ENCODE measurements at regions of chr19 and their contacts with region 1.

Region 1: GRCh38 chr19:18058208-18059030 is 28.3 kb downstream of the IL12RB1 start:
- DNase-seq: no peak
- H3K4me3 ChIP-seq: peak overlapping the region; percentile 30
- CTCF ChIP-seq: peak; percentile 93

Region 2: GRCh38 chr19:17947815-17948513 is 110.5 kb before region 1 on chr19:
- CTCF ChIA-PET with region 1: interaction called, 12 read pairs
- POLR2A ChIA-PET with region 1: no interaction called
- DNase-seq: no peak
- H3K4me3 ChIP-seq: peak overlapping the region; percentile 60
- CTCF ChIP-seq: no peak

Region 3: DNA sequence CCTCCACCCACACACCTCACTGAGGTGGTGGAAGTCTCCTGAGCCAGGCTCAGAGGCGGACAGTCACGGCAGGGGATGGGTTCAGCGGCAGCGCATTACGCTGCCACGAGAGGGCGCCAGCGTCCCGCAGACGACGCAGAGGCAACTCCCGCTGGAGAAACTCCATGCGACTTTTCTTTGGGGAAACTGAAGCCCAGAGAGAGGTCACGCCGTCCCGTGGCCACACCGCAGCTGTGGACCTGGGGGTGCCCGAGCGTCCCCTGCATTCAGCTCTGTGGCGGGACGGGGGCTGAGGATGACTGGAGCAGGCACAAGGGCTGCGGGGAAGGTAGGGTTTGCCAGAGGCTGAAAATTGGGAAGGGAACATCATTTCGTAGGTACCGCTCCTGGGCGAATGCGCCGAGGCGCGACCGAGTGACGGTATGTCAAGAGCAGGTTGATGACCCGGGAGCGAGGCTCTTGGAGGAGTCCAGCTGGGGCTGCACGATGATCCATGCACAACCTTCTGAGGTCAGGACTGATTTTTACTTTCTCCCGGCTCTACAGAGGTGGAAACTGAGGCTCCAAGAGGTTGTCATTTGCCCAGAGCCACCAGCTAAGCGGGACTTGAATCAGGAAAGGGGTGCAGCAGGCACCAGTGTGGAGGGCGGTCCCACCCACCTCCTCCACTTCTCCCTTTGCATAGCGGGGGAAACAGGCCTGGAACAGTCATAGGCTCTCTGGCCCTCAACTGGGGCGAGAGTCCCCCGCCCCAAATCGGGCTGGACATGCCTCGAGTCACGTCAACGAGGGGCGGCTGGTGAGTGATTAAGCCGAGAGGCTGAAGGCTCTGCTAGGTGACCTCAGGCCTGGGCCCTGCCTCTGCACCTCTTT is 51.1 kb before region 1 on chr19:
- CTCF ChIA-PET with region 1: interaction called, 229 read pairs
- POLR2A ChIA-PET with region 1: no interaction called
- DNase-seq: no peak
- H3K4me3 ChIP-seq: peak overlapping the region; percentile 60
- CTCF ChIP-seq: peak; percentile 97

Region 4: GRCh38 chr19:18029617-18030338 is 28.6 kb before region 1 on chr19:
- CTCF ChIA-PET with region 1: interaction called, 18 read pairs
- POLR2A ChIA-PET with region 1: no interaction called
- DNase-seq: no peak
- H3K4me3 ChIP-seq: no peak overlapping the region
- CTCF ChIP-seq: no peak

Region 5: GRCh38 chr19:18086590-18087138 is 28.2 kb after region 1 on chr19 and contains the start of gene IL12RB1:
- CTCF ChIA-PET with region 1: interaction called, 11 read pairs
- POLR2A ChIA-PET with region 1: no interaction called
- DNase-seq: no peak
- H3K4me3 ChIP-seq: no peak within 1 kb of the TSS; the same call in 1 of the 2 replicates
- CTCF ChIP-seq: no peak